MCF 10A (cell line): ENCODE measurements at regions of chrX and their contacts with region 1.

Region 1: DNA sequence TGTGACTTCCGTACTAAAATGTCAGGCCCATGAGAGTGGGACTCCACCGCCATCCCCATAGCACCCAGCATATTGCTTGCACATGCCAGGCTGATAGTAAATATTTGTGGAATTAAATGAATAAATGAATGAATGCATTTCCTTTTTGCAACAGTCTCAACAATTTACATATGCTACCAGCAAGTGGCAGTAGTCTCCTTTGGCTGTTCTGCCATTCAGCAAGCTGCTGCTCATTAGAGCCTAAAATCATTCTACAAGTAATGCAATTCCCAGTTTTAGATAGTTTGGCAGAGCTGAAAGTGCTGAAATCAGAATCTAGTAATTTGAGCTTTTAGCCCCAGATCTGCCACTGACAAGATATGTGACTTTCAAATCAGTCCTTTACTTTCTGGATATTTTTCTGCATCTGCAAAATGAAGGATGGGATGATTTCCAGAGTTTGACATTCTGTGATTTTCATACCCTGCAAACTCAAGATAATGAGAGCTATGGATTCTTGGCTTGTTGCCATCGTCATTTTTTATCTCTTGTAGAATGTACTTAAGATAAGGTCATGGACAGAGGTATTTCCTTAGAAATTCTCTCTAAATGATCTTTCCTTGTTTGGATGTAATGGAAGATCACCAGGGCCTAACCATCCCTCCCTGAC is 35.7 kb upstream of the INTS6L start:
- DNase-seq: peak; percentile 44
- H3K4me3 Mint-ChIP-seq: no peak overlapping the region
- H3K27ac Mint-ChIP-seq: no peak overlapping the region
- H3K4me1 Mint-ChIP-seq: no peaks in the 10 kb centered on the region
- H3K27me3 Mint-ChIP-seq: peaks cover 22% of the 10 kb centered on the region
- CTCF ChIP-seq: peak; percentile 54

Region 2: GRCh38 chrX:135185795-135186443 is 298.8 kb before region 1 on chrX:
- CTCF ChIA-PET with region 1: no interaction called
- POLR2A ChIA-PET with region 1: no interaction called
- intact Hi-C with region 1: loop called (anchors 2 kb)
- DNase-seq: peak; percentile 69
- H3K4me3 Mint-ChIP-seq: no peak overlapping the region
- H3K27ac Mint-ChIP-seq: no peak overlapping the region
- H3K4me1 Mint-ChIP-seq: no peaks in the 10 kb centered on the region
- H3K27me3 Mint-ChIP-seq: peaks cover 98% of the 10 kb centered on the region
- CTCF ChIP-seq: peak; percentile 73

Region 3: GRCh38 chrX:135521405-135522189 is 36.8 kb after region 1 on chrX:
- CTCF ChIA-PET with region 1: interaction called, 3 read pairs
- POLR2A ChIA-PET with region 1: interaction called, 4 read pairs
- intact Hi-C with region 1: loop called (anchors 5 kb)
- DNase-seq: peak; percentile 90
- H3K4me3 Mint-ChIP-seq: peak overlapping the region; percentile 88
- H3K27ac Mint-ChIP-seq: peak overlapping the region; percentile 92
- H3K4me1 Mint-ChIP-seq: peaks cover 5% of the 10 kb centered on the region
- H3K27me3 Mint-ChIP-seq: peaks cover 28% of the 10 kb centered on the region
- CTCF ChIP-seq: no peak

Region 4: GRCh38 chrX:135572436-135572835 is 87.7 kb after region 1 on chrX:
- CTCF ChIA-PET with region 1: interaction called, 9 read pairs
- POLR2A ChIA-PET with region 1: interaction called, 3 read pairs
- intact Hi-C with region 1: loop called (anchors 1 kb)
- DNase-seq: no peak
- H3K4me3 Mint-ChIP-seq: no peak overlapping the region
- H3K27ac Mint-ChIP-seq: no peak overlapping the region
- H3K4me1 Mint-ChIP-seq: no peaks in the 10 kb centered on the region
- H3K27me3 Mint-ChIP-seq: peaks cover 24% of the 10 kb centered on the region
- CTCF ChIP-seq: peak; percentile 55

Region 5: DNA sequence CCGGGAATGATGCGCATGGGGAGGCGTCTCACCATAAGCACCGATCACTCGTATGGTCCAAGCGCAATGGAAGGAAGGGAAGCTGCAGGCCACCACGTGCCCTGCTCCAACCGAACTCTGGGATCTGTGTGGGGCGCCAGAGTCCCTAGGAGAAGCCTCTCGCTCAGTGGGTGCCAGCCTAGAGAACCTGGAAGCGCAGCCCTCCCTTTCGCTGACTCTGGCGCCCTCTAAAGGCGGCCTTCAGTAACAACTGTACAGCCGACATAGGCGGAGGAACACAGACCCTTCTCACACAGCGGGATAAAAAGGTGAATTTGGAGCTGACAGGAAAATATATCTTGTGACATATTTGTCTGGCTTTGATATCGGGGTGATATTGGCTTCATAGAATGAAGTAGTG is 111.7 kb after region 1 on chrX:
- CTCF ChIA-PET with region 1: interaction called, 4 read pairs
- POLR2A ChIA-PET with region 1: interaction called, 3 read pairs
- intact Hi-C with region 1: loop called (anchors 1 kb)
- DNase-seq: peak; percentile 59
- H3K4me3 Mint-ChIP-seq: no peak overlapping the region
- H3K27ac Mint-ChIP-seq: no peak overlapping the region
- H3K4me1 Mint-ChIP-seq: no peaks in the 10 kb centered on the region
- H3K27me3 Mint-ChIP-seq: peaks cover 32% of the 10 kb centered on the region
- CTCF ChIP-seq: peak; percentile 52

Region 6: GRCh38 chrX:135931644-135932487 is 447.1 kb after region 1 on chrX:
- CTCF ChIA-PET with region 1: interaction called, 11 read pairs
- POLR2A ChIA-PET with region 1: no interaction called
- intact Hi-C with region 1: loop called (anchors 2 kb)
- DNase-seq: peak; percentile 62
- H3K4me3 Mint-ChIP-seq: no peak overlapping the region
- H3K27ac Mint-ChIP-seq: no peak overlapping the region
- H3K4me1 Mint-ChIP-seq: no peaks in the 10 kb centered on the region
- H3K27me3 Mint-ChIP-seq: peaks cover 43% of the 10 kb centered on the region
- CTCF ChIP-seq: peak; percentile 77